ENCODE measurements at regions of chr7 and their contacts with region 1.

Region 1: DNA sequence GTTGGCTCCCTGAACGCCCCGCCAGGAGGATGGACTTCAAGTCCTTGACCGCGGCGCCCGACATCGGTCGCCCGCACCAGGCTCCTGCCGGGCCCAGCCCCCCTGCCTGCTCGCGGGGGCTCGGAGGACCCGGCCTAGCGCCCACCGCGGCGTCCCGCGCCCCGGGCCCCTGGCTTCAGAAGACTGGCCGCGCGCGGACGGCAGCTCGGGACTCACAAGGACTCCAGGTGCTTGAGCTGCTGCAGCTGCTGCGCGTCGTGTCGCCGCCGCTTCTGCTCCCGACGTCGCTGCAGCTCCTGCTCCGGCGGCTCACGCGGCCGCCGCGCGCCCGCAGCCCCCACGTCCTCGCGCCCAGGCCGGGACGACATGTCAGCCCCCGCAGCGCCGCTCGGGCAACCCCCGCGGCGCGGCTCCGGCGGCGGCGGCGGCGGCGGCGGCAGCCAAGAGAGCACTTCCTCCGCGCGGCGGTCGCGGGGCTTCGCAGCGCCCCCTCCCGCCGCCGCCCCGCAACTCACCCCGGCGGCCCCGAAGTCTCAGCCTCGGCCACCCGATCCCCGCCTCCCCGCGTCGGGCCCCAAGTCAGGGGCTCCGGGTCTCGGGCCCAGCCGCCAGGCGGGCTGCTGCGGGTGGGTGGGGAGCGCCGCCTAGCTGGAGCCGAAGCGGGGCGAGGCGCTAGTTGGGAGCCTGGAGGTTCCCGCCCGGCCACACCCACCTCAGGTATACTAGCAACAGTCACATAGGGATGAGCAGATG is at the start of gene RP9:
- DNase-seq: peak; percentile 73
- H3K4me3 Mint-ChIP-seq: peak within 1 kb of the TSS; percentile 90
- H3K27ac Mint-ChIP-seq: peak within 1 kb of the TSS; percentile 65
- H3K4me1 Mint-ChIP-seq: peaks cover 23% of the 10 kb centered on the region
- H3K27me3 Mint-ChIP-seq: peaks cover 22% of the 10 kb centered on the region
- total RNA-seq, gene RP9: 15.4 and 18.6 TPM in 2 replicates

Region 2: GRCh38 chr7:32490127-32490822 is 618.9 kb before region 1 on chr7 and contains the start of gene LSM5:
- intact Hi-C with region 1: loop called (anchors 5 kb)
- DNase-seq: peak; percentile 87
- H3K4me3 Mint-ChIP-seq: peak within 1 kb of the TSS; percentile 89
- H3K27ac Mint-ChIP-seq: peak within 1 kb of the TSS; percentile 94
- H3K4me1 Mint-ChIP-seq: peaks cover 28% of the 10 kb centered on the region
- H3K27me3 Mint-ChIP-seq: no peaks in the 10 kb centered on the region
- total RNA-seq, gene LSM5: 78.9 and 88.5 TPM in 2 replicates

Region 3: DNA sequence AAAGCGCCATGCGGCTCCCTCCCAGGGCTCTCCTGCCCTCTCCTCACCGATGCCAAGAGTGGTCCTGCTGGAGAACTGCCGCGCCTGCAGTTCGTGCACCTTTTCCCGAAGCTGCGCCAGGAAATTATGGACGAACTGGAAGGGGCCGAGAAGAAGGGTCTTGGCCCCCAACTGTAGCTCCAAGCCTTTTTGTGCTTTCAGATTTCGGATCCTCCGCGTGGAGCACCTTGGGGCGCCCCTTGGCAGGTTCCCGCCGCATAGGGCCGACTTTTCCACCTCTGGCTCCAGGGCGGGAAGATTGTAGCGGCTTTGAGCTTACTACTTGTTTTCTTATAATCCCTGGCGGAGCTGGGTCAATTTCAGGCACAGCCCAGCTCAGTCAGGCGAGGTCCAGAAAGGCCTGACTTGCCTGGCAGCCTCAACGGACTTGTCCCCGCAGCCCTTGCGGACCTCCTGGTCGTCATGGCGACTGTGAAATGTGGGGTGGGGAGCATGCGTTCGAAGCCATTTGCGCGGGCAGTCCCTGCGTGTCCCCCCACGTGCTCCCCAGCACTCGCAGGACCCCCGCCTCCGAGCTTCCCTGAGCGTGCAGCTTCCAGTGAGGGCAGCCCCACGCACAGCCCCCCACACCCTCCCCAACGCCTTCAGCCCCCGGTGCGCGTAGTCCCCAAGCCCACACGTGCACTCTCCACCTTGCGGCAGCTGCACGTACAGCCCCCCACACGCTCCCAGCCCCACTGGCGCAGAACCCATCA is 347.6 kb before region 1 on chr7:
- intact Hi-C with region 1: loop called (anchors 10 kb)
- DNase-seq: no peak
- H3K4me3 Mint-ChIP-seq: no peak overlapping the region
- H3K27ac Mint-ChIP-seq: no peak overlapping the region
- H3K4me1 Mint-ChIP-seq: peaks cover 3% of the 10 kb centered on the region
- H3K27me3 Mint-ChIP-seq: peaks cover 58% of the 10 kb centered on the region

Region 4: DNA sequence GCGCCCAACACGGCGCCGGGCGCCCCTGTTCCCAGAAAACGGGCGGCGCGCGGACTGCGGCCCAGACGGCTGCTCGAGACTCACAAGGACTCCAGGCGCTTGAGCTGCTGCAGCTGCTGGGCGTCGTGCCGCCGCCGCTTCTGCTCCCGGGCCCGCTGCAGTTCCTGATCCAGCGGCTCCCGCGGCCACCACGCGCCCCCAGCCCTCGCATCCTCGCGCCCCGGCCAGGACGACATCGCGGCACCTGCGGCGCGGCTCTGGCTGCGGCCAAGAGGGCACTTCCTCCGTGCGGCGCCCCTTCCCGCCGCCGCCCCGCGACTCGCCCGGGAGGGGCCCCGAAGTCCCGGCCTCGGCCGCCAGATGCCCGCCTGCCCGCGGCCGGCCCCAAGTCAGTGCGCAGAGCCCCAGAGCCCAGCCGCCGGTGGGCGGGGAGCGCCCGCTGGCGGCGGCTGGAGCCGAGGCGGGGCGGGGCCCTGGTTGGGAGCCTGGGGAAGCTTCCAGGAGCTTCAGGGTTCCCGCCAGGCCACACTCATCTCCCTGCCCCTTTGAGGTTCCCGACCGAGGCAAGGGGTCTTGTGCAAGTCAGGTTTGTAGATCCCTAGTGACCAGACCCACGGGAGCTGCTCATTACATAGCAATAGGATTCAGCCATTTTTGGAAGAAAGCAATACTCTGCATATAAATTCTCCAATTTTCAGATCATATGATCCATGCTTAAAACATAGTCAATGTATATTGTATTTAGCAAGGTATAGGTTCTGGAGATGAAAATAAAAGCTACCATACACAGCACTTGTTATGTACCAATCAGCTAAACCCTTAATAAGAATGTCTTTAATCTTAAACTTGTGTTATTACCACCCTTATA is 166.2 kb before region 1 on chr7:
- intact Hi-C with region 1: loop called (anchors 5 kb)
- DNase-seq: peak; percentile 53
- H3K4me3 Mint-ChIP-seq: peak overlapping the region; percentile 63
- H3K27ac Mint-ChIP-seq: no peak overlapping the region
- H3K4me1 Mint-ChIP-seq: peaks cover 20% of the 10 kb centered on the region
- H3K27me3 Mint-ChIP-seq: peaks cover 7% of the 10 kb centered on the region

Region 5: GRCh38 chr7:33062782-33063443 is 46.3 kb before region 1 on chr7:
- intact Hi-C with region 1: loop called (anchors 1 kb)
- DNase-seq: peak; percentile 90
- H3K4me3 Mint-ChIP-seq: peak overlapping the region; percentile 94
- H3K27ac Mint-ChIP-seq: peak overlapping the region; percentile 89
- H3K4me1 Mint-ChIP-seq: peaks cover 35% of the 10 kb centered on the region
- H3K27me3 Mint-ChIP-seq: peaks cover 2% of the 10 kb centered on the region